ENCODE measurements at regions of chr2 and their contacts with region 1.

Region 1: DNA sequence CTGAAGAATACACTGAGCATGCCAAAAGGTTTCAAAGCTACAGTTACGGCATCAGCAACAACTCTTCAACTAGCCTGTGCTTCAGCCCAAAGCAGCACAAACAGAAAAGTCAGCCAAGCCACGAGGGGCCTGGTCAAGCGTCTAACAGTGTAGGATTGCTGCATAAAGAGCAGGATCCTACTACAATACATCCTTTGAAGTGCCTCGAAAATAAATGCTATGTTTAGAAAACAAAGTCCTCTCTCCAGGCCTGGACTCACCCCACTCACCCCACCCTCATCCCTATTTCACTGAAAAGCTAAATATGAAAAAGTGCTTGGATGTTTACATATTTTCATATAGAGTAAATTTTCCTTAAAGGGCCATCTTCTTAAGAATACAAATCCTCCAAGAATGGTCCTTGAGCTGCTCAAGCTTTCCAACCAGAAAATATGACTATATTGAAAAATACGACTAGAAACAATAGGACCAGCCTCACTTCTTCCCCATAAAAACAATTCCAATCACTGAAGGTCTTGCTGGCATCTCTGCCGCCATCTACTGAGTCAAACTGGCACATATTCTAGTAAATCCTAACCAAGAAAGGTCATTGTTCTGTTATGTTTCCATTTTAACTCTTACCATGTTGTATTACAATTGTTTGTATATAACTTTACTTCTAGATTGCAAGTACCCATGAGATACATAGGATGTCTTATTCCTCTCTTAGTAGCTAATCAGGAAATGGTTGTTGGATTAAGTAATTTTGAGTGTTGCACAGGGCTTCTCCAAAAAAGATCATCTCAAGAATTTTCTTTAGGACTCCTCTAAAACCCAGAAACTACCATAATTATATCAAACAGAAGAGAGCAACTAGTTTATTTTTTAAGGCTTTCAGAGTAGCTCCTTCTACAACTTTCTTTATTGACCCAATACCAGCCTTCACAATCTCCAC is 63.6 kb downstream of the CLHC1 start:
- DNase-seq: peak in 1 of 2 donors; percentile 52
- ATAC-seq: peak; percentile 63 to 80 (median 72)
- H3K4me3 ChIP-seq: no peak overlapping the region
- H3K27ac ChIP-seq: peak overlapping the region in 6 of 10 donors; percentile 5 to 53 (median 27)
- H3K4me1 ChIP-seq: peaks cover 0 to 39% (median 15%) of the 10 kb centered on the region in 9 donors
- H3K27me3 ChIP-seq: no peaks in the 10 kb centered on the region
- CTCF ChIP-seq: peak; percentile 50 to 82 (median 76)

Region 2: GRCh38 chr2:54641988-54642387 is 526.5 kb before region 1 on chr2:
- intact Hi-C with region 1: no loop called
- DNase-seq: peak; percentile 61 to 72
- ATAC-seq: peak in 7 of 8 donors; percentile 17 to 75 (median 63)
- H3K4me3 ChIP-seq: no peak overlapping the region
- H3K27ac ChIP-seq: peak overlapping the region in 9 of 10 donors; percentile 17 to 95 (median 67)
- H3K4me1 ChIP-seq: peaks cover 7 to 64% (median 53%) of the 10 kb centered on the region in 9 donors
- H3K27me3 ChIP-seq: no peaks in the 10 kb centered on the region
- CTCF ChIP-seq: no peak

Region 3: DNA sequence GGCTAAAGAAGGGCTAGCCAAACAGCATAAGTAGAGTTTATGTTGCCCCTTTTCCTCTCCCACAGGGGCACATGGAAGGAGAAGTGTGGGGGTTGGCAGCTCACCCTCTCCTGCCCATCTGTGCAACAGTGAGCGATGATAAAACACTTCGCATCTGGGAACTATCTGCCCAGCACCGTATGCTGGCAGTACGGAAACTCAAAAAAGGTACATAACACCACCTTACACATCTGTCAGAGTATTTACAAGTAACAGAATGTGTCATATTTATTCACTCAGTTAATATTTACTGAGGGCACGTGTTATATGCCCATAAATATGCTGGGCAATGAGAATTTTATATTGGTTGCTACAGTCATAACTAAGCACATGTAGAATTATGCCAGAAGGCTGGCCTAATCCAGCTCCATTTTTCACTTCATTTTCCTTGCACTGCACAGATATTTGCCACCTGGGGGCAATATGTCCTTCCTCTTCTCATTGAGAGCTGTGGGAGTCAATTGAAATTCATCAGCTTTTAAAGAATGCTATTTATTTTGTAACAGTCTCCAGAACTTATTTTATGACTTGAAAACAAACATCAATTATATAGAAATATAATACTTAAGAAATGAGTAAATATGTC is 268.8 kb before region 1 on chr2:
- intact Hi-C with region 1: loop called in 8 of 10 experiments (anchors 5 to 10 kb)
- DNase-seq: no peak
- ATAC-seq: peak in 6 of 8 donors; percentile 52 to 76 (median 70)
- H3K4me3 ChIP-seq: no peak overlapping the region
- H3K27ac ChIP-seq: no peak overlapping the region
- H3K4me1 ChIP-seq: peaks cover 0 to 12% (median 0%) of the 10 kb centered on the region in 9 donors
- H3K27me3 ChIP-seq: no peaks in the 10 kb centered on the region
- CTCF ChIP-seq: peak; percentile 20 to 77 (median 63)

Region 4: GRCh38 chr2:55014962-55015939 is 153.2 kb before region 1 on chr2:
- intact Hi-C with region 1: loop called in 8 of 10 experiments (anchors 1 to 10 kb)
- DNase-seq: peak in 1 of 2 donors; percentile 48
- ATAC-seq: peak in 7 of 8 donors; percentile 64 to 87 (median 79)
- H3K4me3 ChIP-seq: no peak overlapping the region
- H3K27ac ChIP-seq: no peak overlapping the region
- H3K4me1 ChIP-seq: peaks cover 0 to 95% (median 52%) of the 10 kb centered on the region in 9 donors
- H3K27me3 ChIP-seq: no peaks in the 10 kb centered on the region
- CTCF ChIP-seq: peak; percentile 30 to 79 (median 70)

Region 5: GRCh38 chr2:55111570-55112228 is 56.8 kb before region 1 on chr2:
- intact Hi-C with region 1: loop called in 1 of 10 experiments (anchors 5 kb)
- DNase-seq: peak; percentile 31 to 42
- ATAC-seq: peak; percentile 40 to 77 (median 64)
- H3K4me3 ChIP-seq: peak overlapping the region in 1 of 10 donors; percentile 25
- H3K27ac ChIP-seq: peak overlapping the region; percentile 59 to 94 (median 78)
- H3K4me1 ChIP-seq: peaks cover 11 to 52% (median 27%) of the 10 kb centered on the region in 9 donors
- H3K27me3 ChIP-seq: no peaks in the 10 kb centered on the region
- CTCF ChIP-seq: no peak

Region 6: GRCh38 chr2:55550368-55551102 is 382.0 kb after region 1 on chr2:
- intact Hi-C with region 1: no loop called
- DNase-seq: no peak
- ATAC-seq: no peak
- H3K4me3 ChIP-seq: no peak overlapping the region
- H3K27ac ChIP-seq: no peak overlapping the region
- H3K4me1 ChIP-seq: peaks cover 0 to 6% (median 0%) of the 10 kb centered on the region in 9 donors
- H3K27me3 ChIP-seq: no peaks in the 10 kb centered on the region
- CTCF ChIP-seq: no peak